Naive thymus-derived CD4-positive, alpha-beta T cell (primary cell): ENCODE measurements at regions of chr12 and their contacts with region 1.

Region 1: GRCh38 chr12:14981049-14981448 is 8.2 kb downstream of the PDE6H start:
- DNase-seq: no peak
- ATAC-seq: peak; percentile 84
- H3K4me3 ChIP-seq: no peak overlapping the region
- H3K4me3 Mint-ChIP-seq: peak overlapping the region in 6 of 10 donors; percentile 10 to 62 (median 18)
- H3K27ac ChIP-seq: no peak overlapping the region
- H3K27ac Mint-ChIP-seq: peak overlapping the region in 6 of 9 donors; percentile 1 to 78 (median 18)
- H3K4me1 ChIP-seq: peaks cover 17 to 50% of the 10 kb centered on the region in 2 donors
- H3K4me1 Mint-ChIP-seq: peaks cover 41 to 75% (median 68%) of the 10 kb centered on the region in 7 donors
- H3K27me3 ChIP-seq: no peaks in the 10 kb centered on the region
- H3K27me3 Mint-ChIP-seq: no peaks in the 10 kb centered on the region

Region 2: DNA sequence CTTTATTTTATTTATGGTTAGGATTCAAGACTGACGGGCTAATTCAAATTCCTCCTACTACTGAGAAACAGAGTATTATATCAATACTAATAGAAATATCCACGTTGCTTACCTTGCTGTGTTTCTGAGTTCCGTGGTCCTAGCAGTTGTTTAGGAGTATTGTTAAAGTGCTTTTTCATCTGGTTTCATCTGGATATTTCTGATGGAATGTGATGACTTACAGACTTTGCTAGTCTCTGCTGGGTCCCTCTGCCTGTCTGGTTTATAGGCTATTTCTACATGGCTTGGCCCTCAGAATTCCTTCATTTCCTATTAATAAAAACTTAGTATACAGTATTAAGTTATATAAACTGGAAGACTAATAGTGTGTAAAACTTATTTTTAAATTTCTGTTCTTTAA is 167.0 kb before region 1 on chr12 and contains the start of gene SMCO3:
- CTCF ChIA-PET with region 1: no interaction called
- POLR2A ChIA-PET with region 1: no interaction called
- intact Hi-C with region 1: no loop called
- DNase-seq: no peak
- ATAC-seq: no peak
- H3K4me3 ChIP-seq: no peak within 1 kb of the TSS
- H3K4me3 Mint-ChIP-seq: no peak within 1 kb of the TSS
- H3K27ac ChIP-seq: no peak within 1 kb of the TSS
- H3K27ac Mint-ChIP-seq: no peak within 1 kb of the TSS
- H3K4me1 ChIP-seq: peaks cover 0 to 7% of the 10 kb centered on the region in 2 donors
- H3K4me1 Mint-ChIP-seq: peaks cover 4 to 20% (median 14%) of the 10 kb centered on the region in 7 donors
- H3K27me3 ChIP-seq: no peaks in the 10 kb centered on the region
- H3K27me3 Mint-ChIP-seq: peaks cover 0 to 18% (median 3%) of the 10 kb centered on the region in 5 donors
- total RNA-seq, gene SMCO3: not detected

Region 3: DNA sequence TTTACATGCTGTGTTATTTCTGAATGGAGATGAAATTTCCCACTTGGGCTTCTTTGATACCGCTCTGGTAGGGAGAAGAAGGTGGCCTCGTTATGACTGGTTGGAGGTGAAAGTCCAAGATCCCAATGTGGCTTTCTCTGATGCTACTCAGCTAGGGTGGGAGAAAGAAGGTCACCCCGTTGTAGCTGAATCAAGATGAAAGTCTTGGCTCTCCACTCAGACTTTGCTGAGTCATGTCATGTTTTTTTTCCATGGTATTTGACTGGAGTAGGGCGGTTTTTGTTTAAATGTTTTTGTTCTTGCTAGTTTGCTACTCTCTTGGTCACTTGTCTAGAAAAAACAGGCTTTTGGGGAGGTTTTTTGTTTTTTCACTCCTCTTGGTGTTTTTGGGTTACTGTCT is 10.6 kb before region 1 on chr12:
- CTCF ChIA-PET with region 1: no interaction called
- POLR2A ChIA-PET with region 1: interaction called, 22 read pairs
- intact Hi-C with region 1: loop called in 1 of 2 experiments (anchors 1 kb)
- DNase-seq: no peak
- ATAC-seq: no peak
- H3K4me3 ChIP-seq: no peak overlapping the region
- H3K4me3 Mint-ChIP-seq: no peak overlapping the region
- H3K27ac ChIP-seq: no peak overlapping the region
- H3K27ac Mint-ChIP-seq: peak overlapping the region in 3 of 9 donors; percentile 15 to 78 (median 62)
- H3K4me1 ChIP-seq: peaks cover 1 to 18% of the 10 kb centered on the region in 2 donors
- H3K4me1 Mint-ChIP-seq: peaks cover 17 to 82% (median 80%) of the 10 kb centered on the region in 7 donors
- H3K27me3 ChIP-seq: no peaks in the 10 kb centered on the region
- H3K27me3 Mint-ChIP-seq: no peaks in the 10 kb centered on the region